Activated T-helper 2 cell treated with anti-CD3 and anti-CD28 coated beads, Interferon-gamma antibody, Interleukin-2, Interleukin-4, amounts not matched to agents 10 μg/mL and 5 μg/mL and 100 μg/mL, durations not matched to agents 14 hours and 24 hours and 36 hours (primary cell): ENCODE measurements at regions of chr6 and their contacts with region 1.

Region 1: DNA sequence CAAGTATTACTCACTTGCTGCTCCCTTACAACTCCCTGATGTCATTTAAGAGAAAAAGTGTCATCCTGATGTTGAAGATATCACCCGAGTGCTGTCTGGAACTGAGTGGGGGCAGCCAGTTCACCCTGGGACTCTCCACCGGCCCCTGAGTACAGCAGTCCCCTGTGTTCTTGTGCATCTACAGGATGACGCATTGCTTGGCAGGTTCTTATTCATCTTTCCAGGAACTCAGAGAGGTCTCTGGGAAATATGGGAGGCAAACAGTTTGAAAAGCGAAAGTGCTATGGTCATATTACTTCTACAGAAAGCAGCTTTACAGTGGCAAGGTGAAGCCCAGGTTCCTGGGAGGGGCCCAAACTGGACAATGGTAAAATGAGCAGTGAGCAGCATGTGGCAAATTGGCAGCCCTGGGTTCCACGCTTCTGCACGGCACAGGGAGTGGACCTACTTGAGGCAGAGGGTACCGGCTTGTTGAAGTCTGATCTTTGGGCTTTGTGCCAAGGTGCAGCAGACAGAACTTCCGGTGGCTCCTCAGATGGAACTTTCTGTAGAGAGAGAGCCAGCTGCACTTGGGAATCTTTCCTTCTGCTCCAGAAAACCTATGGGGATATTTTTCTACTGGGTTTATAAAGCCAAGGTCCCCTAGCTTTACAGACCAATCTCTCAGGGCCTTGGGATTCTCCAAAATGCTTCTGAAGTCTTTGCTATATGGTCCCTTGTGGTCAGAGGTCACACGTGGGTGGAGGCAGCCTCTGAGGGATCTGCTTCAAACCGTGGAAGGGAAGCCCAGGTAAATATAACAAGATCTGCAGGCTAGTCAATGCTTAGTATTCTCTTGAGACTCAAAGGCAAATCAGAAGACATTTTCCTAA is 128.3 kb downstream of the MAP3K7 start:
- DNase-seq: peak; percentile 68
- H3K4me3 Mint-ChIP-seq: peak overlapping the region; percentile 27
- H3K27ac Mint-ChIP-seq: peak overlapping the region; percentile 95
- H3K4me1 Mint-ChIP-seq: peaks cover 76% of the 10 kb centered on the region
- H3K27me3 Mint-ChIP-seq: no peaks in the 10 kb centered on the region

Region 2: DNA sequence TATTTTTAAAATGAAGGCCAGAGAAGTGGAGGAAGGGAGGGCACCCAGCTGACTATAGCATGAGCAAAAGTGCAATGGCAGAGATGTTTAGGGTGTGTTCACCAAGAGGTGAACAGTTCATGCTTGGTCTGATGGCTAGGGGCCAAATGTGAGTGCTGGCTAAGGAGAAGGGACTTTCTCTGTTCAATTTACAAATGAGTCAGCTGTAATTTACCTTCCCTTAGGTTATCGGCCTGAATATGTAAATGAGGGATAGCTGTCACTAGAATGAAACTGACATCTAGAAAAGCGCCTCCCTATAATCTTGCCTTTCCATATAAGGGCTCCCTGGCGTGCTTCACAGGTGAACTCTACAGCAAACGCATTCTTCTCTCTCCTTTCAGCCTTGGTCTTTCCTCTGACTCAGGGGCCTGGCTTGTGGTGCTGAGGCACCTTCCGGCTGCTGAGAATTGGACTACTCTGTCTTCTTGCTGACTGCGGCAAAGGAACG is 47.3 kb before region 1 on chr6:
- intact Hi-C with region 1: loop called (anchors 1 kb)
- DNase-seq: peak; percentile 62
- H3K4me3 Mint-ChIP-seq: no peak overlapping the region
- H3K27ac Mint-ChIP-seq: peak overlapping the region; percentile 81
- H3K4me1 Mint-ChIP-seq: peaks cover 81% of the 10 kb centered on the region
- H3K27me3 Mint-ChIP-seq: no peaks in the 10 kb centered on the region

Region 3: DNA sequence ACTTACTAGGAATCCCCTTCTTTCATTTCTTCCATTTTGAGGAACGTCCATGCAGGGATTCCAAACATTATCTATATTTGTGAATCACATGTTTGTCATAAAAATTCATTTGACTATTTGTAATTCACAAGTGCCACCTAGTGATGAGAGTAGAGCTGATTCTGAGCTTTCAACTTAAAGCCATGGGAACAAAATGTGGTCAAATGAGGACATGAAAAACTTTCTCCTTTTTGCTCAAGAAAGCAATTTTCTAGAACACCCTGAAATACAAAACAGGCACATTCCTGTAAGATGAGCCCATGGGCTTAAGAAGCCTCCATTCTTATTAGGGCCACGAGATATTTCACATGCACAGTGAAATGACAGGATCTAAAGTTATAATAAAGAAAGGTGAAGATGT is 116.0 kb after region 1 on chr6:
- intact Hi-C with region 1: no loop called
- DNase-seq: no peak
- H3K4me3 Mint-ChIP-seq: no peak overlapping the region
- H3K27ac Mint-ChIP-seq: no peak overlapping the region
- H3K4me1 Mint-ChIP-seq: peaks cover 5% of the 10 kb centered on the region
- H3K27me3 Mint-ChIP-seq: no peaks in the 10 kb centered on the region